Panc1 (cell line): ENCODE measurements at regions of chr2 and their contacts with region 1.

Region 1: GRCh38 chr2:200703127-200703925 is 108.4 kb upstream of the BZW1 start:
- DNase-seq: peak; percentile 51
- ATAC-seq: peak; percentile 81
- H3K4me3 ChIP-seq: no peak overlapping the region
- H3K27ac ChIP-seq: no peak overlapping the region
- H3K4me1 ChIP-seq: no peaks in the 10 kb centered on the region
- H3K27me3 ChIP-seq: no peaks in the 10 kb centered on the region
- CTCF ChIP-seq: peak; percentile 61; the same call in 1 of the 2 replicates

Region 2: DNA sequence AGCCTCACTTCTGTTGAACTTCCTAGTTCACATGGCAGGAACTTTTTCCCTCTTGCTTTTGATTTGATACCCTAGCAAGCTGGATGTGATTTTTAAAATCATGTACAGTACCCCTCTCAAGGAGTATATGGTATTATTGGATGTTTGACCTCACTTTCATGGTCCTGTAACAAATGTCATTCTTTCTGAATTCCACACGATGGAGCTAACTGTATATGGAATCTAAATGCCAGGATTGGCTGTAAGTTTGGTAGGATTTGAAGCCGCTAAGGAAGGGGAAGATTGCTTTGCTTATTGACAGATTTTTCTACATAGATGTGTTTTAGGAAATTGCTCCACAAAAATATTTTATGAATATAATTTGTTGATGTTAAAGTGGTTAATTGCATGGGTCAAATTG is 729.6 kb before region 1 on chr2:
- CTCF ChIA-PET with region 1: no interaction called
- POLR2A ChIA-PET with region 1: no interaction called
- in situ Hi-C with region 1: no loop called
- intact Hi-C with region 1: loop called (anchors 1 kb)
- DNase-seq: no peak
- ATAC-seq: peak; percentile 89
- H3K4me3 ChIP-seq: no peak overlapping the region
- H3K27ac ChIP-seq: no peak overlapping the region
- H3K4me1 ChIP-seq: peaks cover 7% of the 10 kb centered on the region
- H3K27me3 ChIP-seq: no peaks in the 10 kb centered on the region
- CTCF ChIP-seq: peak; percentile 67; the same call in 1 of the 2 replicates

Region 3: DNA sequence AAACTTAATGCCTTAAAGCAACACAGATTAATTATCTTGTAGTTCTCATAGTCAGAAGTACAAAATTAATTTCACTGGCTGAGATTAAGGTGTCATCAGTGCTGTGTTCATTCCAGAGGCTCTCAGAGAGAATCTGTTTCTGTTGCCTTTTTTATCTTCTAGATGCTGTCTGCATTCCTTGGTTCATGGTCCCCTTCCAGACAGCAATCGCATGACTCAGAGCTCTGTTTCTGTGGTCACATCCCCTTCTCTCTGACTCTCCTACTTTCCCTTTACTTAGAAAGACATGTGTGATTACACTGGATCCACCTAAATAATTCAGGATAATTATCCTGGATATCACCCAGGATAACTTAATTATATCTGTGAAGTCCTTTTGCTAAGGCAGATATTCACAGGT is 599.3 kb before region 1 on chr2:
- CTCF ChIA-PET with region 1: no interaction called
- POLR2A ChIA-PET with region 1: no interaction called
- in situ Hi-C with region 1: no loop called
- intact Hi-C with region 1: no loop called
- DNase-seq: no peak
- ATAC-seq: peak; percentile 58; the same call in 1 of the 2 replicates
- H3K4me3 ChIP-seq: no peak overlapping the region
- H3K27ac ChIP-seq: no peak overlapping the region
- H3K4me1 ChIP-seq: no peaks in the 10 kb centered on the region
- H3K27me3 ChIP-seq: no peaks in the 10 kb centered on the region
- CTCF ChIP-seq: no peak

Region 4: DNA sequence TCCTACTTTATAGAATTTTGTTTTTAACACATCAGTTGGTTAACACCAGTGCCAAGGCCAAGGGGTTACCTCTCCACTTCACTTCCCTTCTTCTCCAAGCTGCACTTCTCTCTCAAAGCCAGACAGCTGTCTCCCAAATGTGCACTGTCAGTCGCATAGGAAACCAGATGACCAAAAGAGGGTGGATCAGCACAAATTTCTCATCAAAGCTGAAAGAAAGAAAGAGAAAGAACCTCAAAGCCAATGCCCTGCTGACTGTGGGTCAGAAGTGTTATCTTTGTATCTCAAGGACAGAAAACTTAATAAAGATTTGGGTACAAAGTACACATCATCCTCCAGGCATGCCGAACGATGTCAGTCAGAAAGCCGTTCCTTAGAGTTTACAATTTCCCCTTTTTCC is 364.6 kb before region 1 on chr2:
- CTCF ChIA-PET with region 1: no interaction called
- POLR2A ChIA-PET with region 1: no interaction called
- in situ Hi-C with region 1: no loop called
- intact Hi-C with region 1: no loop called
- DNase-seq: no peak
- ATAC-seq: no peak
- H3K4me3 ChIP-seq: no peak overlapping the region
- H3K27ac ChIP-seq: peak overlapping the region; percentile 72; the same call in 1 of the 2 replicates
- H3K4me1 ChIP-seq: peaks cover 52% of the 10 kb centered on the region
- H3K27me3 ChIP-seq: no peaks in the 10 kb centered on the region
- CTCF ChIP-seq: no peak

Region 5: GRCh38 chr2:200483729-200484198 is 219.6 kb before region 1 on chr2:
- CTCF ChIA-PET with region 1: interaction called, 7 read pairs
- POLR2A ChIA-PET with region 1: no interaction called
- in situ Hi-C with region 1: no loop called
- intact Hi-C with region 1: loop called (anchors 5 kb)
- DNase-seq: peak; percentile 20
- ATAC-seq: peak; percentile 78
- H3K4me3 ChIP-seq: no peak overlapping the region
- H3K27ac ChIP-seq: no peak overlapping the region
- H3K4me1 ChIP-seq: peaks cover 23% of the 10 kb centered on the region
- H3K27me3 ChIP-seq: no peaks in the 10 kb centered on the region
- CTCF ChIP-seq: peak; percentile 80

Region 6: GRCh38 chr2:200578778-200579177 is 124.5 kb before region 1 on chr2:
- CTCF ChIA-PET with region 1: no interaction called
- POLR2A ChIA-PET with region 1: no interaction called
- in situ Hi-C with region 1: no loop called
- intact Hi-C with region 1: loop called (anchors 1 kb)
- DNase-seq: no peak
- ATAC-seq: peak; percentile 80; the same call in 1 of the 2 replicates
- H3K4me3 ChIP-seq: no peak overlapping the region
- H3K27ac ChIP-seq: no peak overlapping the region
- H3K4me1 ChIP-seq: no peaks in the 10 kb centered on the region
- H3K27me3 ChIP-seq: no peaks in the 10 kb centered on the region
- CTCF ChIP-seq: peak; percentile 72

Region 7: DNA sequence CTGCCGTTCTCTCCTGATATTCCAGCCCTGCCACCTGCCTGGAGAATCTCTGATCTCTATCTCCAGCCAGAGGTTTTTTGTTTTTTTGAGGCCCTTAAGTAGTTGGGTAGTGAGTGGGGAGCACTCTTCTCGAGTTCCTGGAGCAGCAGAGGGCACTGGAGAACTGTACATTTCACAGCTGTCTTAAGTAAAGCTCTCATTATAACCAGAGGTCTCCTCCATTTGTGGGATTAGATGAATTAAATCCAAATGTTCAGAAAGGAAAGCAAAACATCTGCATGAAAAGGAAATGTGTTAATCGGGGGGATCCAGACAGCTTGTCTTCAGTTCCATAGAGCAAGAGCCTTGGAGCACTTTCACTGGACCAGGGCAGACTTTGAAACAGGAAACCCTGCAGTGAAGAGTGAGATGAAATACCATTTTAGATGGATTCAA is 84.7 kb before region 1 on chr2:
- CTCF ChIA-PET with region 1: interaction called, 4 read pairs
- POLR2A ChIA-PET with region 1: no interaction called
- in situ Hi-C with region 1: no loop called
- intact Hi-C with region 1: loop called (anchors 1 kb)
- DNase-seq: no peak
- ATAC-seq: peak; percentile 68; the same call in 1 of the 2 replicates
- H3K4me3 ChIP-seq: no peak overlapping the region
- H3K27ac ChIP-seq: no peak overlapping the region
- H3K4me1 ChIP-seq: peaks cover 6% of the 10 kb centered on the region; the same call in 1 of the 2 replicates
- H3K27me3 ChIP-seq: no peaks in the 10 kb centered on the region
- CTCF ChIP-seq: peak; percentile 63

Region 8: GRCh38 chr2:200765139-200765951 is 62.0 kb after region 1 on chr2:
- CTCF ChIA-PET with region 1: no interaction called
- POLR2A ChIA-PET with region 1: no interaction called
- in situ Hi-C with region 1: no loop called
- intact Hi-C with region 1: no loop called
- DNase-seq: peak; percentile 91
- ATAC-seq: peak; percentile 88
- H3K4me3 ChIP-seq: peak overlapping the region in 1 of 2 experiments; percentile 11; a peak in 2 of 4 replicates
- H3K27ac ChIP-seq: no peak overlapping the region; the same call in 1 of the 2 replicates
- H3K4me1 ChIP-seq: no peaks in the 10 kb centered on the region; the same call in 1 of the 2 replicates
- H3K27me3 ChIP-seq: no peaks in the 10 kb centered on the region
- CTCF ChIP-seq: no peak

Region 9: GRCh38 chr2:201642579-201643215 is 939.4 kb after region 1 on chr2:
- CTCF ChIA-PET with region 1: no interaction called
- POLR2A ChIA-PET with region 1: no interaction called
- in situ Hi-C with region 1: no loop called
- intact Hi-C with region 1: no loop called
- DNase-seq: peak; percentile 48
- ATAC-seq: peak; percentile 94
- H3K4me3 ChIP-seq: peak overlapping the region; percentile 64 to 95
- H3K27ac ChIP-seq: peak overlapping the region; percentile 95
- H3K4me1 ChIP-seq: peaks cover 17% of the 10 kb centered on the region
- H3K27me3 ChIP-seq: no peaks in the 10 kb centered on the region
- CTCF ChIP-seq: no peak